ENCODE measurements at regions of chr17 and their contacts with region 1.

Region 1: DNA sequence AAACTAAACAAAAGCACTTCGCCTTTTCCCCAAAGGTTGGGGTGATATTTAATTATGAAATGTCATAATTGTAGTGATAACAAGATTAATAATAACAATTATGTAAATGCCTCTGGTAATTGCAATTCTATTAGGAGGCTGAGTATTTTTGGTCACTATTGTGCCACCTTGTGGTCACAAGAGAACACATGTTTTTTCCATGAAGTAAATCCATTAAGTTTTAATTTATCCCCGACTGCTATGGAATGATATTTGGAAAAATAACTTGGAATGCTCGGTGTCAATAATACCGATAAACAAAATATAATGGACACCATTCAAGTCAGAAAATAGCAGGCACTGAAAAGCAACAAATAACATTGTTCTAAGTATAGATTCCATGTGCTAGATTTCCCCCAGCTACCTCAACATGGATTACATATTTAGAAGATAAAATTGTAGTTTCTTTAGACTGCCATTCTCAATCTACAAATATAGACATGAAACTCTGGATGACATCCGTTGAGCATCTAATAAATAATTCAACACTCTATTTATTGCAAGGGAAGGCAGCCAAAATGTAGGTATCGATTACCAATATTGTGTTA is 25.0 kb upstream of the KCNJ2 start:
- DNase-seq: no peak
- ATAC-seq: no peak

Region 2: GRCh38 chr17:69607162-69607834 is 537.1 kb before region 1 on chr17:
- intact Hi-C with region 1: loop called (anchors 2 kb)
- DNase-seq: peak; percentile 89
- ATAC-seq: peak; percentile 77

Region 3: GRCh38 chr17:69909389-69909788 is 235.0 kb before region 1 on chr17:
- intact Hi-C with region 1: no loop called
- DNase-seq: no peak
- ATAC-seq: no peak